Caco-2 (cell line): ENCODE measurements at regions of chr11 and their contacts with region 1.

Region 1: DNA sequence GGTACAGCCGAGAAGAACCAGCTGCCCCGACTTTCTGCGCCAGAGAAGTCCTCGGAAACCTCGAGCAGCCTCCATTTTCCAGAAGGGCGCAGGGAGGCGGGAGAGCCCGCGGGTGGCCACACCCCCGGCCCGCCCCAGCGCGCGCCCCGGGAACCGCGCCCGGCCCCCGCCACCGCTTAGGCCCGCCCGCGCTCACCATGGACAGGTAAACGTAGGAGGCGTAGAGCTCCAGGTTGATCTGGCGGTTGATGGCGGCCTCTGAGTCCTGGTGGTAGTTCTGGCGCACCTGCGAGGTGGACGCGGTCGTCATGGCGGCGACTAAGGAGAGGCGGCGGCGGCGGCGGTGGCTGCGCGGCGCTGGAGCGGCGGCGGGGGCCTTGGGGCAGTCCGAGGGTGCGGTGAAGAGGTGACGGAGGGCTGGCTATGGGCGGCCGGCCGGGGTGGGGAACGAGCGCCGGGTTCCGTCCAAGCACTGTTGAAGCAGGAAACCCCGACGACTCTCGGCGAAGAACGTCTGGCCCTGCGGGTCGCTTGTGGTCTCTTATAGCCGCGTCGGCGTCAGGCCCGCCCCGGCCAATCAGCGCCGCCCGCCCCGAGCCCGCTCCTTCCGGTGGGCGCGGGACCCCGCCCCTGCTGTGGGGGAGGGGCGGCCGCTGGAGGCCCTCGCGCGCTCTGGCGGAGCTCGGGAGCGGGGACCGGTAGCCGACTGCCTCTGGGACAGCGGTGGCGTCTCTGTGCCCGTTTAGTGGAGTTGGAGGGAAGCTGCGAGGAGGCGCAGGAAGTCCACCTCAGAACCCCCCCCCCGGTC is at the start of gene FTH1:
- DNase-seq: peak; percentile 92 to 96
- H3K4me3 ChIP-seq: peak within 1 kb of the TSS; percentile 92
- H3K4me3 Mint-ChIP-seq: peak within 1 kb of the TSS; percentile 81
- H3K27ac Mint-ChIP-seq: peak within 1 kb of the TSS; percentile 93
- H3K4me1 ChIP-seq: peaks cover 35% of the 10 kb centered on the region
- H3K4me1 Mint-ChIP-seq: peaks cover 39% of the 10 kb centered on the region
- H3K27me3 ChIP-seq: no peaks in the 10 kb centered on the region
- H3K27me3 Mint-ChIP-seq: no peaks in the 10 kb centered on the region
- CTCF ChIP-seq: no peak
- total RNA-seq, gene FTH1: 1,282 and 1,565 TPM in 2 replicates

Region 2: GRCh38 chr11:61899146-61899841 is 68.0 kb before region 1 on chr11:
- CTCF ChIA-PET with region 1: interaction called, 13 read pairs
- POLR2A ChIA-PET with region 1: no interaction called
- intact Hi-C with region 1: no loop called
- DNase-seq: peak; percentile 89 to 96
- H3K4me3 ChIP-seq: no peak overlapping the region
- H3K4me3 Mint-ChIP-seq: no peak overlapping the region
- H3K27ac Mint-ChIP-seq: no peak overlapping the region
- H3K4me1 ChIP-seq: no peaks in the 10 kb centered on the region
- H3K4me1 Mint-ChIP-seq: no peaks in the 10 kb centered on the region
- H3K27me3 ChIP-seq: no peaks in the 10 kb centered on the region
- H3K27me3 Mint-ChIP-seq: no peaks in the 10 kb centered on the region
- CTCF ChIP-seq: peak; percentile 100

Region 3: DNA sequence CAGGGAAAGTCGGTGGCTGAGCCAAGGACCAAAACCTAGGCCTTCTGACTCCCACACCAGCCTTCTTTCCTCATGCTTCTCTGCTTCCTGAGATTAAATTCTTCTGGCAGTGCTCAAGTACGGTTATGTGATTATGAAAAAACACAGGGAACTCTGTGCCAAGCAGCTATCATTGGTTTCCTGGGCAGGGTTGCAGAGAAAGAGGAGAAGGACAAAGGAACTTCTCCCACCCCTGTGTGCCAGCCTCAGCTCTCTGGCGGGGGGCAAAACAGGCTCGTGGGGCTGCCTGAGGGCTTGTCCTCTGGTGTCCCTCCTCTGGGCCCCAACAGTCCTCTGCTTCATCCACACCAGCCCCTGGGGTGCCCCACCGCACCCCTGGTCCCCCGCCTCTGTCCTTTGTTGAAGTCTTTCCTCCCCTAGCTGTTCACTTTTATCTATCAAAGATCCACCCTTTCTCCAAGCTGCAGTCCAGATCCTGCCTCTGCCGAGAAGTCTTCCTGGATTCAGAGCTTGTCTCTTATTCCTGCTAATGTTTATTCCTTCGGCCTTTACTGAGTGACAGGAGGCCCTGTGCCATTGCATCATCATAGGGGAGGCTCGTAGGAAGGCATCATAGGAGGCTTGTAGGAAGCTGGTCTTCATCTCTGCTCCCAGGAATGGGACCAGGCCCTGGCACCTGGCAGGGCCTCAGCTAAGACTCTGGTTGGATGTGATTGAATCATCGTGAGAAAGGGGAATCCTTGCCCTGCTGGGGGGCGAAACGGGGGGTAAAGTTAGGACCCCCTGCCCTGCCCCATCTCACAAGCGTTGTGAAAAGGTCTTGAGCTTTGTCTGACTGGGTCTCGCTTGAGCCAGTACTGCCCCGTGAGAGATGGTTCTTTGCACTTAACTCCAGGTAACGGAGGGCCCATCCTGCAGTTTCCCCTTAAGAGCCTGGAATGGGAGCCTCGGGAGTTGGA is 11.7 kb after region 1 on chr11:
- CTCF ChIA-PET with region 1: interaction called, 3 read pairs
- POLR2A ChIA-PET with region 1: interaction called, 12 read pairs
- intact Hi-C with region 1: no loop called
- DNase-seq: no peak
- H3K4me3 ChIP-seq: no peak overlapping the region
- H3K4me3 Mint-ChIP-seq: no peak overlapping the region
- H3K27ac Mint-ChIP-seq: no peak overlapping the region
- H3K4me1 ChIP-seq: peaks cover 13% of the 10 kb centered on the region
- H3K4me1 Mint-ChIP-seq: peaks cover 14% of the 10 kb centered on the region
- H3K27me3 ChIP-seq: no peaks in the 10 kb centered on the region
- H3K27me3 Mint-ChIP-seq: no peaks in the 10 kb centered on the region
- CTCF ChIP-seq: no peak

Region 4: DNA sequence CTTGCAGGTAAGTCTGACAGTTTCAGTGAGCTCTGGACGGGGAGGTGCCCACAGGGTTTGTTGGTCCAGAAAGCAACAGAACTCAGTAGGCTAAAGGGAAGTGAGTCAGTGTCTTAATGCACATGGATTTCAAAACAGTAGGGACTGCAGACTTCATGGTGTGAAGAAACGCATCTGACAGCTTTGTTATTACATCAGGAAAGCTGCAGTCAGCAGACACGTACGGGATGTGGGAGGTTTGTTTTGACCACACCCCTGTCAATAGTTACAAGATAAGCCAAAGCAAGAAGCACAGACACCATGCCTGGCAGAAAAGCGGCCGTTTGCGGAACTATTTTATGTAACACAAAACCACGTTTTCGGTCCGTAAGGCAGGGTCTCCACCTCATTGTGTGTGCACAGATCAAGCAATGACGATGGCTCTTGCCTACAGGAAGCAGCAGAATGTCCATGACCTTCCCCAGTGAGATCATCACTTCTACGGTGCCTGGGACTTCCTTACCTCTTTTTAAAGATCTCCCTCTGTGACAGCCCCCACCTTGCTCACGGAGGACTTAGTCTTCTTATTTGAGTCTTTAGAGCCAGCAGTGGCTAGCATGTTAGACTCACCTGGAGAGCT is 58.3 kb after region 1 on chr11:
- CTCF ChIA-PET with region 1: interaction called, 6 read pairs
- POLR2A ChIA-PET with region 1: interaction called, 3 read pairs
- intact Hi-C with region 1: loop called (anchors 2 kb)
- DNase-seq: peak; percentile 66 to 71
- H3K4me3 ChIP-seq: peak overlapping the region; percentile 2; the same call in 1 of the 2 replicates
- H3K4me3 Mint-ChIP-seq: peak overlapping the region; percentile 63
- H3K27ac Mint-ChIP-seq: peak overlapping the region; percentile 34
- H3K4me1 ChIP-seq: 0 out of 2 replicates have a peak, but pooled peaks cover 5% of the 10 kb centered on the region
- H3K4me1 Mint-ChIP-seq: peaks cover 5% of the 10 kb centered on the region
- H3K27me3 ChIP-seq: no peaks in the 10 kb centered on the region
- H3K27me3 Mint-ChIP-seq: no peaks in the 10 kb centered on the region
- CTCF ChIP-seq: no peak

Region 5: GRCh38 chr11:62324738-62325556 is 357.6 kb after region 1 on chr11:
- CTCF ChIA-PET with region 1: no interaction called
- POLR2A ChIA-PET with region 1: no interaction called
- intact Hi-C with region 1: no loop called
- DNase-seq: peak; percentile 46 to 64
- H3K4me3 ChIP-seq: no peak overlapping the region
- H3K4me3 Mint-ChIP-seq: no peak overlapping the region
- H3K27ac Mint-ChIP-seq: peak overlapping the region; percentile 86
- H3K4me1 ChIP-seq: peaks cover 32% of the 10 kb centered on the region
- H3K4me1 Mint-ChIP-seq: peaks cover 37% of the 10 kb centered on the region
- H3K27me3 ChIP-seq: no peaks in the 10 kb centered on the region
- H3K27me3 Mint-ChIP-seq: no peaks in the 10 kb centered on the region
- CTCF ChIP-seq: peak; percentile 49 to 51